MCF 10A (cell line): ENCODE measurements at regions of chr7 and their contacts with region 1.

Region 1: GRCh38 chr7:22667562-22668239 is 59.3 kb upstream of the IL6 start:
- DNase-seq: peak; percentile 60
- H3K4me3 Mint-ChIP-seq: no peak overlapping the region
- H3K27ac Mint-ChIP-seq: peak overlapping the region; percentile 66
- H3K4me1 Mint-ChIP-seq: peaks cover 41% of the 10 kb centered on the region
- H3K27me3 Mint-ChIP-seq: no peaks in the 10 kb centered on the region
- CTCF ChIP-seq: no peak

Region 2: GRCh38 chr7:22718200-22718711 is 50.6 kb after region 1 on chr7:
- CTCF ChIA-PET with region 1: no interaction called
- POLR2A ChIA-PET with region 1: no interaction called
- intact Hi-C with region 1: loop called (anchors 2 kb)
- DNase-seq: peak; percentile 83
- H3K4me3 Mint-ChIP-seq: peak overlapping the region; percentile 10
- H3K27ac Mint-ChIP-seq: peak overlapping the region; percentile 96
- H3K4me1 Mint-ChIP-seq: peaks cover 36% of the 10 kb centered on the region
- H3K27me3 Mint-ChIP-seq: no peaks in the 10 kb centered on the region
- CTCF ChIP-seq: no peak

Region 3: DNA sequence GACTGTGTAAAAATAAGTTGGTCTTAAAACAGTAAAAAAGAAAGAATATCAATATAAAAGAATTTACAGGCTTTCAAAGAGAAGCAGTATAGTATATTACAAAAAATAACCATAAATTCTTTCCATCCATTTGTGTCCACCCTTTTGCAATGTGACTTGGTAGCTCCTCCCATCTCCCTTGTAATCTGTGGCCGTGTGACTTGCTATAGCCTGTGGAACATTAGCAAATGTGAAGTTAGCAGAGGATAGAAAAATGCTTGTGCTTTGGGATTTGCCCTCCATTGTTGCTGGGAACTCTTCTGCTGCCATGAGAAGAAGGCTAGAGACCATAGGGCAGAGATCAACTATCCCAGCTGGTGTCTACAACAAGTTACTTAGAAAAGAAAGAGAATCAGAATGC is 468.1 kb after region 1 on chr7:
- CTCF ChIA-PET with region 1: no interaction called
- POLR2A ChIA-PET with region 1: no interaction called
- intact Hi-C with region 1: no loop called
- DNase-seq: no peak
- H3K4me3 Mint-ChIP-seq: no peak overlapping the region
- H3K27ac Mint-ChIP-seq: no peak overlapping the region
- H3K4me1 Mint-ChIP-seq: no peaks in the 10 kb centered on the region
- H3K27me3 Mint-ChIP-seq: no peaks in the 10 kb centered on the region
- CTCF ChIP-seq: no peak